ENCODE measurements at regions of chr15 and their contacts with region 1.

Region 1: GRCh38 chr15:49235446-49236124 is 65.5 kb downstream of the GALK2 start:
- DNase-seq: peak in 2 of 3 donors; percentile 38 to 50
- ATAC-seq: peak; percentile 84 to 89
- H3K4me3 ChIP-seq: no peak overlapping the region
- H3K27ac ChIP-seq: no peak overlapping the region
- H3K4me1 ChIP-seq: no peaks in the 10 kb centered on the region
- H3K27me3 ChIP-seq: no peaks in the 10 kb centered on the region

Region 2: DNA sequence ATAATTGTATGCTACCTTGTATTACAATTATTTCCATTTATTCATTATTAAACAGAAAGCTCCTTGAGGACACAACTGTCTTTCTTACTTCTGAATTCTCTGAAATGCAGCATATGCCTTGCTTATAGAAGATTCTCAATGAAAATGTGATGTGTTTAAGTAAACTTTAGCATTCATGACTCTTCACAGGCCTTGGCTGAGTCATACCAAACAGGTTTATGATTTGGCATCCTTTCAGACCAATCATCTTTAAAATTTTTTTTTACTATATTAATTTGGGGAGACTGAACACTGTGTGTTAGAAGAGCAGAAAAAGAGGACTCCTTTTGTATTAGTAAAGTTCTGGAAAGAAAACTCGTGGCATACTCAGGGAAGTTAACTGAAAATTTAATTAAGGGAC is 71.9 kb before region 1 on chr15:
- intact Hi-C with region 1: no loop called
- DNase-seq: no peak
- ATAC-seq: no peak
- H3K4me3 ChIP-seq: no peak overlapping the region
- H3K27ac ChIP-seq: no peak overlapping the region
- H3K4me1 ChIP-seq: no peaks in the 10 kb centered on the region
- H3K27me3 ChIP-seq: no peaks in the 10 kb centered on the region

Region 3: DNA sequence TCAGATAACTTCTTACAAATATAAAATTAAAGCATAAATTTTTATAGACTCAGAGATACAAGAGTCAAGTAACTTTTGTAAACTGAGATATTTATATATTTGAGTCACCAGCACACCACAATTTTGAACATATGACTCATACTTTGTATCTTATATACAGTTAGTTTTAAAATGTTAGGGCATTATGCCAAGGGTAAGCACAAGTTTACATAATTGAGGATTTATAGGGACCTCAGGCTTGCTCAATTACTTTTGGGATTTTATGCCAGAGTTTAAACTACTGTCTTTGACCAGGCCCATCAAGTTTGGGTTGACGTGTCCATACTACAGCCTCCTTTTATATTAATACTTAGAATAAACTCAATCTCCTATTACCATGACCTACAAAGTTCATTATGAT is 180.1 kb after region 1 on chr15:
- intact Hi-C with region 1: loop called (anchors 5 to 10 kb)
- DNase-seq: no peak
- ATAC-seq: no peak
- H3K4me3 ChIP-seq: no peak overlapping the region
- H3K27ac ChIP-seq: no peak overlapping the region
- H3K4me1 ChIP-seq: no peaks in the 10 kb centered on the region
- H3K27me3 ChIP-seq: no peaks in the 10 kb centered on the region

Region 4: GRCh38 chr15:49421991-49422390 is 186.4 kb after region 1 on chr15:
- intact Hi-C with region 1: loop called (anchors 5 to 10 kb)
- DNase-seq: peak; percentile 35 to 90 (median 78)
- ATAC-seq: peak; percentile 65 to 74
- H3K4me3 ChIP-seq: peak overlapping the region; percentile 22
- H3K27ac ChIP-seq: no peak overlapping the region
- H3K4me1 ChIP-seq: no peaks in the 10 kb centered on the region
- H3K27me3 ChIP-seq: no peaks in the 10 kb centered on the region

Region 5: GRCh38 chr15:50003786-50004334 is 768.3 kb after region 1 on chr15:
- intact Hi-C with region 1: loop called in 1 of 4 experiments (anchors 10 kb)
- DNase-seq: peak; percentile 88 to 97 (median 93)
- ATAC-seq: peak; percentile 99
- H3K4me3 ChIP-seq: no peak overlapping the region
- H3K27ac ChIP-seq: no peak overlapping the region
- H3K4me1 ChIP-seq: no peaks in the 10 kb centered on the region
- H3K27me3 ChIP-seq: no peaks in the 10 kb centered on the region

Region 6: DNA sequence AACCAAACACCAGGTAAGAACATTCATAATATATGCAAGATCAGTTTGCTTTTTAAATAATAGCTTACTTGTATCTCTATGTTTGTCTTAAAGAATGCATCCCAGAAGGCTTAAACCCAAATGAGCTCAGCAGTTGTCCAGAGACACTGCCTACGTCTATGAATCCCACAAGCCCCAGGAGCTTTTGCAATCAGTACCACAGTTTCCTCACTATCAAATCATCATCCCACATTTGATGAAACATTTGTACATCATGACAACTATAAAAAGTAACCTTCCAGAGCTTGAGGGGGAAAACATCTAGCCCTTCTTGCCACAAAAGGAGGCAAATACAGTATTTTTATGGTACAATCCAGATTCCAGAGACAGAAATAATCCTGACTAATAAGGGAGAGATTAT is 819.7 kb after region 1 on chr15:
- intact Hi-C with region 1: loop called in 1 of 4 experiments (anchors 5 kb)
- DNase-seq: peak in 1 of 3 donors; percentile 28
- ATAC-seq: peak; percentile 81 to 89
- H3K4me3 ChIP-seq: no peak overlapping the region
- H3K27ac ChIP-seq: no peak overlapping the region
- H3K4me1 ChIP-seq: peaks cover 2% of the 10 kb centered on the region
- H3K27me3 ChIP-seq: no peaks in the 10 kb centered on the region

Region 7: DNA sequence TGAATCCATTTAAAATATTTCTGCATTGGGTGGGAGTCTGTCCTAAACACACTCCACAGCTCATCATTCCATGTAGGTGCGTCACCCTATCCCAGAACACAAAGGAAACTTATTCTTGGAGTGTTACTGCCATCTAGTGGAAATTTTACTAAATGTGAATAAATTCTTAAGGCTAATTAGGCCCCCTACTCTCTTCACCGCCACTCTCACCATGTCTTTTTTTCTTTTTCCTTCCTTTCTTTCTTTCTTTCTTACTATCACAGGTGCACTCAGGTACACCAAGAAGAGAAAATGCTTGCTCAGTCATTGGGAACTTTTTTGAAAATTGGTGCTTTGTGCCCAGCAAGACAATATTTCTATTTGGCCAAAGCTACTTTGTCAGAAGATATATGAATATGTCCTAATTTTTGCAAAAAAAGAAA is 909.9 kb after region 1 on chr15:
- intact Hi-C with region 1: loop called in 2 of 4 experiments (anchors 10 kb)
- DNase-seq: no peak
- ATAC-seq: peak; percentile 85 to 90
- H3K4me3 ChIP-seq: no peak overlapping the region
- H3K27ac ChIP-seq: no peak overlapping the region
- H3K4me1 ChIP-seq: no peaks in the 10 kb centered on the region
- H3K27me3 ChIP-seq: no peaks in the 10 kb centered on the region

Measured in right cardiac atrium (tissue), 5 donors.